A549 (cell line): ENCODE measurements at regions of chr1 and their contacts with region 1.

Region 1: DNA sequence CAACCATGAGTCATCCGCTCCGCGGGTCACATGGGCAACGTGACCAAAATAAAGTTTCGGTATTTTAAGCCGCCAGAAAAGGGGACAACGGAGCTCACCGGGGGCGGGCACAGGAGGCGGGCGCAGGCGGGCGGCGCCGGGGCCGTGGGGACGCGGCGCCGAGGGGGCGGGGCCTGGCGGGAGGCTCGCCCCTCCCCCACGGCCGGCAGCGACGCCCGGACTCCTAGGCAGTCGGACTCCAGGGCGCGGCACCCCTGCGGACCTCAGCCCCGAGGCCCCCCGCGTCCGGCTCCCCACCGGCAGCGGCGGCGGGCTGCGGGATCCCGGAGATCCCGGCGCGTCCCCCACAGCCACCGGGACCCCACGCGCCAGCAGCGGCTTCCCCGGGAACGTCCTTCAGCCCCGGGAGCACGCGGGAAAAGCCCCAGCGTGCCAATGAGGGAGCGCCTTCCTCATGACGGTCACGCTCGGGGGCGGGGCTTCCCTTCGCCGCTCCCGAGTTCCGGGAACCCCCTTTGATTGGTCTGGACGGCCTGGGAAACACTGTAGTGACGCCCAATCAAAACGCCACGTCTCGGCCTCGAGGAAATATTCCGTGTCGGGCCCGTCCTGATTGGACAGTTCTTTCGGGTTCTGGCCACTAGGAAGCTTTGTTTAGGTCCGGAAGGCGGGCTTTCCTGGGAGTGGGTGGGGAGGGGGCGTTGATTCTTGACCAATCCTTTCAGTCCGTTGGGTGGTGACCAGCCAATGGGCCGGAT is 515 bp upstream of the CAMTA1 start:
- DNase-seq: peak; percentile 97 to 100
- ATAC-seq: peak; percentile 90 to 96
- H3K4me3 ChIP-seq: peak overlapping the region; percentile 98
- H3K27ac ChIP-seq: peak overlapping the region; percentile 94 to 99
- H3K4me1 ChIP-seq: peaks cover 7% of the 10 kb centered on the region; the same call in 2 of the 3 replicates
- CTCF ChIP-seq: no peak
- EP300 ChIP-seq: no peak
- POLR2A ChIP-seq: peak; percentile 52
- RAD21 ChIP-seq: no peak

Region 2: DNA sequence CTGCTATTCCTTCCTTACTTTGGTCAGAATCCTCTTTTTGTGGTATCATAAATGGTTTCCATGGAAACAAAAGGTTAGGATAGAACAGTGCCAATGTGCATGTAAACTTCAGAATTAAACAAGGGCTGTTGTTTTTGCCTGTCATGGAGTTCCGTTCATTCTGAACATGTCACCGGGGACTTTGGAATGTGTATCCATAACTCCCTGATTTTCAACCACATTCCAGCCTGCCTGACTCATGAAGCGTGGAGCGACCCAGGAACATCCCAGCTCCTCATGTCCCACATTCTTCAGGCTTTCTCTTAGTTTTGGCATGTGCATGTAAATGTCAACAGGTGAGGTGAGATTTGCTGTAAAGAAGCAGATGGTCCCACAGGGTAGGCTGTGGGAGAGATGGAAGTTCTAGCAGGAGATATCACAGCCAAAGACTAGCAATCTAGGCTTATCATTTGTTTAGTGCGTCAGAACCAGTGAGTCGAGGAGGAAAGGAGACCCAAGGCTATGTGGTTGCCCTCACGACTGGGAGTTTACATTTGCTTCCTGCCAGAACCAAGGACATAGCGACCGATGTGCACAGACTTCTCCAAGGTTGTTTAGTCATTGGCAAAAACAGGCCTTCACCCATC is 60.1 kb before region 1 on chr1:
- CTCF ChIA-PET with region 1: interaction called, 13 read pairs
- POLR2A ChIA-PET with region 1: interaction called, 11 read pairs
- DNase-seq: peak; percentile 54 to 63
- ATAC-seq: peak; percentile 86 to 89
- H3K4me3 ChIP-seq: no peak overlapping the region
- H3K27ac ChIP-seq: peak overlapping the region; percentile 30 to 69; a peak in 3 of 6 replicates
- H3K4me1 ChIP-seq: peaks cover 14% of the 10 kb centered on the region; the same call in 2 of the 3 replicates
- CTCF ChIP-seq: no peak
- EP300 ChIP-seq: no peak
- POLR2A ChIP-seq: no peak
- RAD21 ChIP-seq: no peak

Region 3: GRCh38 chr1:6743189-6744101 is 41.3 kb before region 1 on chr1:
- CTCF ChIA-PET with region 1: interaction called, 3 read pairs
- POLR2A ChIA-PET with region 1: interaction called, 10 read pairs
- DNase-seq: peak in 1 of 2 experiments; percentile 34
- ATAC-seq: peak; percentile 75 to 79; a peak in 5 of 6 replicates
- H3K4me3 ChIP-seq: no peak overlapping the region
- H3K27ac ChIP-seq: peak overlapping the region in 1 of 2 experiments; percentile 59; a peak in 4 of 6 replicates
- H3K4me1 ChIP-seq: peaks cover 8% of the 10 kb centered on the region; the same call in 2 of the 3 replicates
- CTCF ChIP-seq: no peak
- EP300 ChIP-seq: no peak
- POLR2A ChIP-seq: no peak
- RAD21 ChIP-seq: no peak

Region 4: DNA sequence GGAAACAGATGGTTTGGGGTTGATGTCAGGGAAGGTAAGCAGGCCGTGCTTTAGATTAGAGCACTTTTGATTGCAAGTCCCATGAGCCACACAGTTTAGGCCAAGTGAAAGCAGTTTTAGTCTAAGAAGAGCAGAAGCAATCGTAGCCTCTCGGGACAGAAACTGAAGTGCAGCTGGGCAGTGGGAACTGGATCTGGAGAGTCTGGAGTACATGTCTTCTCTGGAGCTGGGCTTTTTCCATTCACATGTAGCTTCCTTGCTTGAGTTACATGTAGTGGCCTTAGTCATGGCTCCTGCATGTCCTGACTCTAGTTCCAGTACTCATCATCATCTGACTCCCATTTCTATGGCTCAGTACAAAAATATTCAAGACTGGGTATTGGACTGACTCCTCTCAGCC is 17.2 kb after region 1 on chr1:
- CTCF ChIA-PET with region 1: interaction called, 3 read pairs
- POLR2A ChIA-PET with region 1: interaction called, 10 read pairs
- DNase-seq: no peak
- ATAC-seq: peak; percentile 30 to 38; a peak in 3 of 6 replicates
- H3K4me3 ChIP-seq: no peak overlapping the region
- H3K27ac ChIP-seq: peak overlapping the region; percentile 32 to 64; a peak in 5 of 6 replicates
- H3K4me1 ChIP-seq: peaks cover 59% of the 10 kb centered on the region
- CTCF ChIP-seq: no peak
- EP300 ChIP-seq: no peak
- POLR2A ChIP-seq: no peak
- RAD21 ChIP-seq: no peak